ENCODE measurements at regions of chr17 and their contacts with region 1.

Region 1: DNA sequence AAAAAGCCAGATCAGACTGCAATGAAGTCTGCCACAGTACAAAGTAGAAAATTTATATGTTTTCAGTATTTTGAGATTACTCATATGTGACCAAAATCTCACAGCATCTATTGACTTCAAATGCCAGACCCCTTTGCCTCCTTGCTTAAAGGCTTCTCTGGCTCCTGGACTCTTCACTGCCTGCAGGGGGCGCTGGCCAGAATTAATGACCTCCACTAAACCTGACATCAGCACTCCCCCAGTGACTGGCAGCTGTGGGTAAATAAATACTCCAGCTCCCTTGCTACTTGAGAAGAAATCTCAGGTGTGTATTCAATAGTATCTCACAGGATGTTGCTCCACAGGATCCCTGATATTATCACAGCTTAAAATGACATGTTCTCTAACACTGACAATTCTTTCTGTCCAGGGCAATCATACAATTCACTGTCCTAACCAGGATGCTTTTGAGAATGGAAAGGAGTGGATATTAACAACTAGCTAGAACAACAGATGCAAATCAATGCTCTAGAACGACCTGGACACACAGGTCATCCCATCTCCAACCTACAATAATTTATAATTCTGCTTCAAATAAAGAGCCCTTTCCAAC is 4.0 kb downstream of the BECN1 start:
- DNase-seq: peak; percentile 74
- H3K4me3 Mint-ChIP-seq: no peak overlapping the region
- H3K27ac Mint-ChIP-seq: no peak overlapping the region
- H3K4me1 Mint-ChIP-seq: peaks cover 36% of the 10 kb centered on the region
- H3K27me3 Mint-ChIP-seq: no peaks in the 10 kb centered on the region

Region 2: GRCh38 chr17:42866631-42867575 is 46.9 kb after region 1 on chr17:
- CTCF ChIA-PET with region 1: no interaction called
- POLR2A ChIA-PET with region 1: no interaction called
- DNase-seq: no peak
- H3K4me3 Mint-ChIP-seq: no peak overlapping the region
- H3K27ac Mint-ChIP-seq: no peak overlapping the region
- H3K4me1 Mint-ChIP-seq: no peaks in the 10 kb centered on the region
- H3K27me3 Mint-ChIP-seq: peaks cover 22% of the 10 kb centered on the region

Region 3: DNA sequence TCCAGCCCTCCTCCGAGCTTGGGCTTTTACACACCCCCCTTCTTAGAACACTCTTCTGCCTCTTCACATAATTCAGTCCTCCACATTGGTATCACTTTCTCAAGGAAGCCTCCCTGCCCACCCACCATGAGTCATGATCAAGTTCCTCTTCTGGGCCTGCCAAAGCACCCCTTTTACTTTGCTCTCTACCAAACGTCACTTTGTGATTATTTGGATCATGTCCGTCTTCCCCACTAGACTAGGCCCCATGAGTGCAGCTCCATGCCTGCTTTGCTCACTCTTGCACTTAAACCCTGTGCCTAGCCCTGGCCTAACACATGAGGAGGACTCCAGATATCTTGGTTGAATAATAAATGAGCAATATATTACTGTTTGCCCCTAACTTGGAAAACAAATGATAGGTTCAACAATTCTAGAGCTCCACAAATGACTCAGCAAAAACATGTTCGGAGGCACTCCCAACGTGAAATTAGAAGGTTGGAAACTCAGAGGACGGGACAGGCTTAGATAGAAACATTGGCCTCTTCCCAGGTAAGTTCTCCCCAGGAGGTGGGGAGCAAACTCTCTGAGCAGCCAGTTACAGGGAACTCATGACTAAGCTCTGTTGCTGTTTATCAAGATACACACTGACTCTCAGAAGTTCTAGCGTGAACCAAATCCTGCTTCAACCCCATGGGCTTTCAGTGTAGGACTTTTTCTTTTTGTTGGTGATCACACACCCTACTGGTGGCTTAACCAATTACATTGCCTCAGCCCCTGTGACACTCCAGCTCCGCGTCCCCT is 108.9 kb after region 1 on chr17:
- CTCF ChIA-PET with region 1: interaction called, 10 read pairs
- POLR2A ChIA-PET with region 1: interaction called, 3 read pairs
- DNase-seq: peak; percentile 16
- H3K4me3 Mint-ChIP-seq: no peak overlapping the region
- H3K27ac Mint-ChIP-seq: peak overlapping the region; percentile 13
- H3K4me1 Mint-ChIP-seq: peaks cover 12% of the 10 kb centered on the region
- H3K27me3 Mint-ChIP-seq: peaks cover 4% of the 10 kb centered on the region

Measured in activated CD4-positive, alpha-beta memory T cell treated with anti-CD3 and anti-CD28 coated beads, Interleukin-2, amount 10 ng/mL, durations not matched to agents 7 days and 5 days (primary cell).